ENCODE measurements at regions of chr22 and their contacts with region 1.

Region 1: GRCh38 chr22:28829358-28830181 is 29.2 kb upstream of the XBP1 start:
- DNase-seq: peak; percentile 92
- ATAC-seq: peak; percentile 89
- H3K4me3 ChIP-seq: peak overlapping the region in 2 of 3 experiments; percentile 22 to 34; a peak in 3 of 6 replicates
- H3K27ac ChIP-seq: peak overlapping the region; percentile 69
- H3K4me1 ChIP-seq: peaks cover 41% of the 10 kb centered on the region
- H3K27me3 ChIP-seq: no peaks in the 10 kb centered on the region
- CTCF ChIP-seq: peak; percentile 95
- EP300 ChIP-seq: peak; percentile 35 to 57; a peak in 3 of 4 replicates
- POLR2A ChIP-seq: peak in 1 of 2 experiments; percentile 19; a peak in 1 of 4 replicates
- RAD21 ChIP-seq: peak; percentile 98

Region 2: DNA sequence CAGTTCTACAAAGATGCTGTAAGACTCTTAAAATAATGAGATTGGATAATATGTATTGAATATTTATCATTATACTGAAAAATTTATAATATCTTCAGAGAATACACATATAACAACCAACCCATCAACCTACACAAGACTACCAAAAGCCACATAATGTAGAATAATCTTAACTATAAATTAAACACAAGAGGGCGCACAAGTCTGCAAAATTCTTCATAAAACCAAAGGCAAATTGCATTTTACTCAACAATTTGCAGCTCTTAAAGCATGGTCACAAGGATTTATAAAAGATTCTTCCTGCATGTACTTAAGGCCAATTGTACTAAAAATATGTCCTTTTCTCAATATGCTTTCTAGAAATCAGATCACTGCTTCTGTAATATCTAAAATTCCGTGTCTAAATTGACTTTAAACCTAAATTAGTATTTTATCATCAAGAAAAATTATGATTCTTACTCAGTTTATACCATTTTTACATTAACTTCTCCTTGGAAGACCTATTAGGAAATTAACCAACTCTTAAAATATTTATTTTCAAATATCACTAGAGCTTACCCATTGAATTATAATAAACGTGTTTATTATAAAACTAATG is 228.9 kb before region 1 on chr22:
- CTCF ChIA-PET with region 1: interaction called, 5 read pairs
- POLR2A ChIA-PET with region 1: interaction called, 3 read pairs
- in situ Hi-C with region 1: loop called (anchors 10 kb)
- intact Hi-C with region 1: loop called (anchors 1 kb)
- DNase-seq: peak; percentile 53
- ATAC-seq: no peak
- H3K4me3 ChIP-seq: no peak overlapping the region
- H3K27ac ChIP-seq: no peak overlapping the region
- H3K4me1 ChIP-seq: peaks cover 13% of the 10 kb centered on the region
- H3K27me3 ChIP-seq: no peaks in the 10 kb centered on the region
- CTCF ChIP-seq: peak; percentile 68
- EP300 ChIP-seq: no peak
- POLR2A ChIP-seq: no peak
- RAD21 ChIP-seq: 0 out of 2 replicates have a peak, but pooled peaks have one; percentile 10

Region 3: GRCh38 chr22:28791841-28792490 is 37.6 kb before region 1 on chr22:
- CTCF ChIA-PET with region 1: interaction called, 11 read pairs
- POLR2A ChIA-PET with region 1: interaction called, 945 read pairs
- in situ Hi-C with region 1: loop called (anchors 5 kb)
- intact Hi-C with region 1: loop called (anchors 5 kb)
- DNase-seq: no peak
- ATAC-seq: peak; percentile 36
- H3K4me3 ChIP-seq: no peak overlapping the region
- H3K27ac ChIP-seq: peak overlapping the region; percentile 54
- H3K4me1 ChIP-seq: peaks cover 52% of the 10 kb centered on the region
- H3K27me3 ChIP-seq: no peaks in the 10 kb centered on the region
- CTCF ChIP-seq: no peak
- EP300 ChIP-seq: no peak
- POLR2A ChIP-seq: no peak
- RAD21 ChIP-seq: no peak

Region 4: GRCh38 chr22:28800308-28801077 is 29.1 kb before region 1 on chr22 and contains the start of gene XBP1:
- CTCF ChIA-PET with region 1: interaction called, 12 read pairs
- POLR2A ChIA-PET with region 1: interaction called, 945 read pairs
- in situ Hi-C with region 1: no loop called
- intact Hi-C with region 1: loop called (anchors 1 kb)
- DNase-seq: peak; percentile 89
- ATAC-seq: peak; percentile 95
- H3K4me3 ChIP-seq: peak within 1 kb of the TSS; percentile 66 to 99 (median 82)
- H3K27ac ChIP-seq: peak within 1 kb of the TSS; percentile 98
- H3K4me1 ChIP-seq: peaks cover 42% of the 10 kb centered on the region
- H3K27me3 ChIP-seq: no peaks in the 10 kb centered on the region; a peak in 1 of 5 replicates
- CTCF ChIP-seq: no peak
- EP300 ChIP-seq: no peak
- POLR2A ChIP-seq: peak; percentile 91 to 98
- RAD21 ChIP-seq: peak; percentile 49; the same call in 1 of the 2 replicates
- total RNA-seq, gene XBP1: 313 and 427 TPM in 2 replicates

Region 5: DNA sequence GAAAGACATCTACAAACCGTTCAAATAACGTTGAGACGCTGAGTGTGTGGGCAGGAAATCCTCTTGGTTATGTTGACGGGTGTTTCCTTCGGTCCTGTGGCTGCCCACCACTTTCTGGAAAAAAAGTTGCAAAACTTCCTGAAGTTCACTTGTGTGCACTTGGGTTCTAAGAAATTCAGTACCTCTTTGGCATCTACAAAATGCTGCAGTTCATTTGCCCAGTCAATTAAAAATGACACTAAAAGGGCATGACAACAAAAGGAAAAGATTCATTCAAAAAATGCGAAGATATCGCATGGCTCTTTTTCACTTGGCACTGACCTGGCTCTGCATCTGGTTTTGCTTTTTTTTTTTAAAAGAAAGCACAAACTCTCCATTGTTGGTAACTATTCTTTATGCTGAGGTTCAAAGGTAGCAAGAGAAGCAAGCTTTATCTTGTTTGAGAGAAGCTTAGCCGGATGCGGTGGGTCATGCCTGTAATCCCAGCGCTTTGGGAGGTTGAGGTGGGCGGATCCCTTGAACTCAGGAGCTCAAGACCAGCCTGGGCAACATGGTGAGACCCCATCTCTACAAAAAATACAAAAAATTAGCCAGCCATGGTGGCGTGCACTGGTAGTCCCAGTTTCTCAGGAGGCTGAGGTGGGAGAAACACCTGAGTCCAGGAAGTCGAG is 18.6 kb before region 1 on chr22:
- CTCF ChIA-PET with region 1: interaction called, 5 read pairs
- POLR2A ChIA-PET with region 1: interaction called, 29 read pairs
- in situ Hi-C with region 1: no loop called
- intact Hi-C with region 1: no loop called
- DNase-seq: peak; percentile 96
- ATAC-seq: peak; percentile 45
- H3K4me3 ChIP-seq: peak overlapping the region; percentile 38 to 51 (median 41); a peak in 4 of 6 replicates
- H3K27ac ChIP-seq: peak overlapping the region; percentile 98
- H3K4me1 ChIP-seq: peaks cover 94% of the 10 kb centered on the region
- H3K27me3 ChIP-seq: no peaks in the 10 kb centered on the region
- CTCF ChIP-seq: no peak
- EP300 ChIP-seq: peak; percentile 62 to 90; a peak in 2 of 4 replicates
- POLR2A ChIP-seq: no peak
- RAD21 ChIP-seq: no peak

Region 6: DNA sequence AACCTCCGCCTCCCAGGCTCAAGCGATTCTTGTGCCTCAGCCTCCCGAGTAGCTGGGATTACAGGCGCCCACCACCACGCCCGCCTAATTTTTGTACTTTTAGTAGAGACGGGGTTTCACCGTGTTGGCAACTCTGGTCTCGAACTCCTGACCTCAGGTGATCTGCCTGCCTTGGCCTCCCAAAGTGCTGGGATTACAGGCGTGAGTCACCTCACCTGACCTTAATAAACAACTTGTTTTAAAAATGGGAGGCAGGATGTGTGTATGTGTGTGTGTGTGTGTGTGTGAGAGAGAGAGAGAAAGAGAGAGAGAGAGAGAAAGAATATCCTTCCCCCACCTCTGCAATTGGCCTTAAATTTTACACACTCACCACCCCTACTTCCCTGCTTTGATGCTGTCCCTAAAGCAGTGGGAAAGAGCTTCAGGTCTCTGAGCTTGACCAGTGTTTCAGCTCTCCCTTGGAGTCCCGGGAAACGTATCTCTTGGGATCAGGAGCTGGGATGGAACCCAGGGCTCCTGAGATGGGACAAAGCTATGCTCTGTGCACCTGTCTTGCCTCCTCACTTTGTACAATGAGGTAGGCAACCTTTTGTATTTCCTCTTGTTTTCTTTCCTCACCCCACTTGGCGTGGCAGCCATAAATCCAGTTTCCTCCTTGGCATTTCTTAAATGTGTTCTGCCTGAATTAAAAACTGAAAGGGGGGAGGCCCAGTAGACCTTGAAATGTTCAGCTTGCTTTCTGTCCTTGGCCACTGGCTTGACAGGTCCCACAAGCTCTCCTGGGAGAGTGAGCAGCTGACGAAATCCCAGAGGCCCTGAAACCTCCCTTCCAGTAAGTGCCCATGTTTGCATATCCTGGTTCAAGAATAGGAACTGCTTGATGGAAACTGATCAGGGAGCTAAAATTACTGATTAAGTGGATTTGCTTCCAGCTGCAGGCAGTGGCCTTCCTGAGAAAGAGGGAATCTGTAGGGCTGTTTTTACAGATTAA is 11.4 kb before region 1 on chr22:
- CTCF ChIA-PET with region 1: interaction called, 5 read pairs
- POLR2A ChIA-PET with region 1: interaction called, 29 read pairs
- in situ Hi-C with region 1: no loop called
- intact Hi-C with region 1: no loop called
- DNase-seq: peak; percentile 79
- ATAC-seq: peak; percentile 33
- H3K4me3 ChIP-seq: peak overlapping the region in 2 of 3 experiments; percentile 42 to 44; a peak in 4 of 6 replicates
- H3K27ac ChIP-seq: peak overlapping the region; percentile 91
- H3K4me1 ChIP-seq: peaks cover 100% of the 10 kb centered on the region
- H3K27me3 ChIP-seq: no peaks in the 10 kb centered on the region
- CTCF ChIP-seq: no peak
- EP300 ChIP-seq: peak in 1 of 2 experiments; percentile 85; a peak in 2 of 4 replicates
- POLR2A ChIP-seq: peak in 1 of 2 experiments; percentile 30; a peak in 1 of 4 replicates
- RAD21 ChIP-seq: 0 out of 2 replicates have a peak, but pooled peaks have one; percentile 4

Measured in HepG2 (cell line).